H1 (cell line): ENCODE measurements at regions of chr17 and their contacts with region 1.

Region 1: GRCh38 chr17:60142872-60143499 is 6.8 kb upstream of the CA4 start:
- DNase-seq: peak in 1 of 2 experiments; percentile 94
- H3K4me3 ChIP-seq: peak overlapping the region in 3 of 4 experiments; percentile 34 to 59 (median 52); a peak in 4 of 8 replicates
- H3K27ac ChIP-seq: no peak overlapping the region
- H3K4me1 ChIP-seq: peaks cover 10 to 29% (median 20%) of the 10 kb centered on the region in 4 experiments
- H3K27me3 ChIP-seq: peaks cover 33 to 44% (median 42%) of the 10 kb centered on the region in 4 experiments
- CTCF ChIP-seq: peak; percentile 77 to 88 (median 82)
- EP300 ChIP-seq: no peak
- POLR2A ChIP-seq: no peak
- RAD21 ChIP-seq: peak; percentile 79 to 81

Region 2: GRCh38 chr17:60127068-60128054 is 15.6 kb before region 1 on chr17:
- CTCF ChIA-PET with region 1: interaction called, 29 read pairs
- POLR2A ChIA-PET with region 1: interaction called, 4 read pairs
- DNase-seq: peak in 1 of 2 experiments; percentile 27
- H3K4me3 ChIP-seq: no peak overlapping the region
- H3K27ac ChIP-seq: no peak overlapping the region
- H3K4me1 ChIP-seq: no peaks in the 10 kb centered on the region
- H3K27me3 ChIP-seq: no peaks in the 10 kb centered on the region
- CTCF ChIP-seq: no peak
- EP300 ChIP-seq: no peak
- POLR2A ChIP-seq: no peak
- RAD21 ChIP-seq: no peak

Region 3: DNA sequence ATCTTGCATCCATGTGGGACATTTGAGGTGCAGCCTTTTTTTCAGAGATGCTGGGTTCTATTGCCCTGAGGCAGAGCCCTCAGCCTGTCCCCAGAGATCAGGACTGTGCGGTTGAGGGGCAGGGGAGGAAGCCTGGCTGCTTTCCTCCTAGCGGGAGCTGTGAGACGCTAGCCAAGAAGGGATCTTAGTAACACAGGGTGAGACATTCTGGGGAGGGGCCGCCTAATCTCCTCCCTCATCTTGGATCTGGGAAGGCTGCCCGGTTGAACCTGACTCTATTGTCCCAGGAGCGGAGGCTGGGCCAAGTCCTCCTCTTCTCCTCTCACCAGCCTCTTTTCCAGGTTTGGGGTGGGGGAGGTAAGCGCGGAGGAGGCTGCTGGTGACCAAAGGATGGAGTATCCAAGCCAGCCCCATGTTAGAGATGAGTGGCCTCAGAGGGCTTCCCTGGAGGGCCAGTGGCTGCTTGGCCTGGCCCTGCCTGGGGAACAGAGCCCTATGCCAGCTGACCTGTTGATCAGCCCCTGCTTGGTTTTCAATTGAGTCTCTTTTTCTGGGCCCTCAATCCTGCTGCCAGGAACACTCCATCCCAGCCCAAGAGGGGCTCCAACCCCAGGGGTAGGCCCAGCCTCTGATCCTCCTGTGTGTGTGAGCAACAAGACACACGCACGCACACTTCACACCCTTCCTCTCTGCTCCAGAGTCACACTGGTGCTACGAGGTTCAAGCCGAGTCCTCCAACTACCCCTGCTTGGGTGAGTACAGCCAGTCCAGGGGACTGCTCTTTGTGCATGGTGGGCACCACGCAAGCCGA is 11.8 kb after region 1 on chr17:
- CTCF ChIA-PET with region 1: interaction called, 148 read pairs
- POLR2A ChIA-PET with region 1: interaction called, 13 read pairs
- DNase-seq: no peak
- H3K4me3 ChIP-seq: no peak overlapping the region
- H3K27ac ChIP-seq: no peak overlapping the region
- H3K4me1 ChIP-seq: peaks cover 7 to 31% (median 14%) of the 10 kb centered on the region in 4 experiments
- H3K27me3 ChIP-seq: peaks cover 3 to 23% (median 17%) of the 10 kb centered on the region in 4 experiments
- CTCF ChIP-seq: no peak
- EP300 ChIP-seq: no peak
- POLR2A ChIP-seq: no peak
- RAD21 ChIP-seq: no peak

Region 4: DNA sequence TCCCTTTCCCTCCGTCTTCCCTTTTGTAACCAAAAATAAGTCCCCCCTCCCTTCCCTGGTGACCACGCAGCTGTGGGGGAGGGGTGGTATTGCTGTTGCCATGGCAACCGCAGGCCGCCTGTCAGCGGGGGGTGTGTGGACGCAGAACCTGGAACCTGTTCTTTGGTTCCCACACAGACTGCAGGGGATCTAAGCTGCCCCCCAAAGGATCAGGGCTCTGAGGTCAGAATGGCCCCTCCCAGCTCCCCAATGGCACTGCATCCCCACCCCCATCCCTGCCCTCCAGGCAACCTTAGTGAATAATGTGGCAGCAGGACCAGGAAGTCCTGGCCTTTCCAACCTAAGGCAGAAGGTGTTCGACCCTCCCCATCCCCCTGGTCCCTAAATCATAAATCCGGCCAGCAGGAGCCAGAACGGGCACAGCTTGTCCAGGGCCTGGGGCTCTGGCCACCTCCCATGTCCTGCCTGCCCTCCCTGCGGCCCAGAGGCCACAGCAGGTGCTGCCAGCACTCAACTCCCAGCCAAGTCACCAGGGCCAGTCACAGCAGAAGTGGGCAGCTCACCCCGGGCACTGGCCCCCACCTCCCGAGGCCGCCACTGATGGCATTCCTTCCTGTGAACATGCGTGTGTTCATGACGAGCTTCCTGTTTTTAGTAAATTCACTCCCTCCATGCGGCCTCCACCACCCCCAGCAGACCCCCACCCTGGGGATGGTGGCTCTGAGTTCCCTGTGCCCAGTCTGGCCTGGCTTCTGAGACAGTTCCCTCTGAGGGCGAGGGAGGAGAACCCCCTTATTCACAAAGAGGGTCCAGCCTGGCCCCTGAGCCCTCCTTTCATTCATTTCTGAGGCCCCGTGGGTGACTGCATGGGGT is 18.9 kb after region 1 on chr17:
- CTCF ChIA-PET with region 1: interaction called, 148 read pairs
- POLR2A ChIA-PET with region 1: interaction called, 13 read pairs
- DNase-seq: peak in 1 of 2 experiments; percentile 83
- H3K4me3 ChIP-seq: peak overlapping the region in 2 of 4 experiments; percentile 2 to 38; a peak in 1 of 8 replicates
- H3K27ac ChIP-seq: no peak overlapping the region
- H3K4me1 ChIP-seq: peaks cover 7 to 51% (median 33%) of the 10 kb centered on the region in 4 experiments
- H3K27me3 ChIP-seq: no peaks in the 10 kb centered on the region
- CTCF ChIP-seq: no peak
- EP300 ChIP-seq: peak in 1 of 2 experiments; percentile 78; a peak in 1 of 3 replicates
- POLR2A ChIP-seq: no peak
- RAD21 ChIP-seq: no peak

Region 5: DNA sequence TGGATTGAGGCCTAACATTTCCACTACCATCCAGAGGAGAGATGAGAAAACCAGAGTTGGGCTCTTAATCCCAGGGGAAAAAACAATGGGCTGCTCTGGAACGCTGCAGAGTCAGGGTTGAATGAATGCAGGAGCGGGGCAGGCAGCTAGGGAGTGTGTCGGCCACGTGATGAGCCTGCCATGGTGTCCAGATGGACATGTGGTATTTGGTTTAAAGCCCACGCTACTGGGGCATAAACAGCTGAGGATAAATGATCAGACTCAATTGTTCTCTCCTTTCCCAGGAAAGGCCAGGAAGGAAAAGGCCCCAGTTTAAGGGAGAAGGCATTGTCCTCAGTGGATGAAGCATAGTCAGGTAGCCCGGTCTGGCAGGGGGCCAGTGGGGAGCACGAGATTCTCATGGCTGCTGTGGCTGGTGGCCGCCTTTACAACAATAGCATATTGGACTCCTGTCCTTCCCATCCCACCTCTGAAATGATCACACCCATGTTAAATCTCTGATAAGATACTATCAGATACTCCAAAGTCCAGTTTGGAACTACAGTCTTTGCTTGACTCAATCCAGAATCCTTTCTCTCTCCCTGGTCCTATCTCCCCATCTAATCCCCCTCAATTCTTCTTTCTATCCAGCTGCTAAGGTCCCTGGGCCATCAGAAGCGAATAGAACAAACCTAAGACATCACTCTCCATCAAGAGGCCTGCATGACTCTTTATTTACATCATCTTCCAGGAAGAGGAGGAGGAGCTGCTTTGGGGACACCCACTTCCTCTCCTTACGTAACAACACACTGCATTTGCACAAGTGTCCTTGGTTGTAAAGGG is 27.1 kb after region 1 on chr17:
- CTCF ChIA-PET with region 1: interaction called, 61 read pairs
- POLR2A ChIA-PET with region 1: interaction called, 4 read pairs
- DNase-seq: no peak
- H3K4me3 ChIP-seq: no peak overlapping the region
- H3K27ac ChIP-seq: no peak overlapping the region
- H3K4me1 ChIP-seq: peaks cover 0 to 6% (median 2%) of the 10 kb centered on the region in 4 experiments; a peak in 4 of 7 replicates
- H3K27me3 ChIP-seq: no peaks in the 10 kb centered on the region
- CTCF ChIP-seq: no peak
- EP300 ChIP-seq: no peak
- POLR2A ChIP-seq: no peak
- RAD21 ChIP-seq: no peak

Region 6: DNA sequence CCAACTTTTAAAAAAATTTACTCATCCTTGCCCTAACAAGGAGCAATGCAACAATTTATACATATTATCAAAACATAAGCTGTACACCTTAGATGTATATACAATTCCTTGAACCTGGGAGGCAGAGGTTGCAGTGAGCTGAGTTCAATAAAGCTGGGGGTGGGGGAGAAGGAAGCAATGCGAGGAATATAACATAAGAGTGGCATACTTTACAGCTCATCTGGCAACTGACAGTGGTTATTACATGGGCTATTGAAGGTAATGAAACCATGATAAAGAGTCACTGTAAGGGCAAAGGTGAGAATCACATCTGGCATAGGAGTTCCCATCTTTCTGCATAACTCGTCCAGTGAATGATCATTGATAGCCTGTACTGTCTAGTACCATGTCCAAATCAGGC is 50.5 kb after region 1 on chr17:
- CTCF ChIA-PET with region 1: interaction called, 22 read pairs
- POLR2A ChIA-PET with region 1: no interaction called
- DNase-seq: no peak
- H3K4me3 ChIP-seq: no peak overlapping the region
- H3K27ac ChIP-seq: no peak overlapping the region
- H3K4me1 ChIP-seq: no peaks in the 10 kb centered on the region
- H3K27me3 ChIP-seq: no peaks in the 10 kb centered on the region
- CTCF ChIP-seq: no peak
- EP300 ChIP-seq: no peak
- POLR2A ChIP-seq: no peak
- RAD21 ChIP-seq: no peak

Region 7: DNA sequence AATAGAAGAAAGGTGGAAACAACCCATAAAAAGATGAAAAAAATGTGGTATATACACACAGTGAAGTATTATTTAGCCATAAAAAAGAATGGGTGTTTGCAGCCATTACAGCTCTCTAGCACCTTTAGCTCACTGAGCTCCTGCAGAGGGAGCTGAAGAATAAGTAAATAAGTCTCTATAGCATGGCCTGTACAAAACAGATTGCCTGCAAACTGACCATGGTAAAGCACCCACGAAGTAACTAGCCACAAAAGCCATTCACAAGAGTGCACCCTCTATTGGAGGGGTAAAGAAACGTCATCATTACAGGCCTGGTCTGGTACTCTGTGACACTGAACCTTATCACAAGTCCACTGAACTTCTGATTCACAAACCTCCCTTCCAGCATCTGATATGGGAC is 172.7 kb after region 1 on chr17:
- CTCF ChIA-PET with region 1: no interaction called
- POLR2A ChIA-PET with region 1: no interaction called
- DNase-seq: no peak
- H3K4me3 ChIP-seq: no peak overlapping the region
- H3K27ac ChIP-seq: no peak overlapping the region
- H3K4me1 ChIP-seq: no peaks in the 10 kb centered on the region
- H3K27me3 ChIP-seq: no peaks in the 10 kb centered on the region
- CTCF ChIP-seq: peak in 2 of 3 experiments; percentile 22 to 48; a peak in 2 of 4 replicates
- EP300 ChIP-seq: no peak
- POLR2A ChIP-seq: no peak
- RAD21 ChIP-seq: no peak